ENCODE measurements at regions of chr3 and their contacts with region 1.

Region 1: DNA sequence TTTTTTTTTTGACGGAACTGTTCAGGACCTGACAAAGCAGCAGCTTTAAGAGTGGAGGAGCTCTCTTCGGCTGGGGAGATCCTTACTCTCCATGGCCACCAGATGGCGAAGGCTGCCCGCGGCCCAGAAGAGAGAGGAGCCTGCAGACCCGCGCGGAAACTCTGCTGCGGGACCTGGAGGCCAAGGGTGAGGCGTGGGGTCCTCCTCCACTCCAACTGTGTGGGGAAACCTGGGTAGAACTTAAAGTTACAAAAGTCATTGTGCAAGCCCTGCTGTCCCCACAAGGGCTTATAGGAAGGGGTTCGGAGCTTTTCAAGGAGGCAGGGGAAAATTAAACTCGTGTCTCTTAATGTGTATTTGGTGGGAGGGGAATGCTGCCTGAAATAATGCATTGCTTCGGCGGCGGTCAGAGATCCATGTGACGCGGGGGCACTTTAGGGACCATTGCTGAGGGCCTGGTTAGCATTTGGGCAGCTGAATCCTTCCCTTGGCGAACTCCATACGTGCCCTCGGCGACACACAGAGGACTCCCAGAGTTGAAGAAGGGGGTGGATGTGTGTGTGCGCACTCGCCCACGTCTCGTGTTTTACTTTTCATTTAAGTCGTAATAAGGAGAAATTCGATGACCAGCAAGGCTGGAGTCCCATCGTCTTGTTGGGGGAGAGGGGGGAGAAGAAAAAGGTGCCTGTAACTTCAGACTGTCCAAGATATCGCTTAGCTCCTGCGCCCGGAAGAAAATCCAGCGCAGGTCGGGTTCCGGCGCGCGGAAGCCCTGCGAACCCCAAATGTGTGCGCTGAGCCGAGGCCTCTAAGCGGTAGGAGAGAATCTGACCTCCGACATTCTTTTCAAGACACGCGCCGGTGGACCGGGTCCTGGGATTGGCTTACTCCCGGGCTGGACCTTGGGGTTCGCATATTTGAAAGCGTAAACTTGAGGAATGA is 9.7 kb downstream of the EOMES start:
- DNase-seq: peak; percentile 85
- CTCF ChIP-seq: peak; percentile 84

Region 2: GRCh38 chr3:27699067-27699466 is 13.3 kb before region 1 on chr3:
- CTCF ChIA-PET with region 1: interaction called, 21 read pairs
- POLR2A ChIA-PET with region 1: no interaction called
- DNase-seq: no peak
- CTCF ChIP-seq: no peak

Region 3: GRCh38 chr3:28139967-28140634 is 427.7 kb after region 1 on chr3:
- CTCF ChIA-PET with region 1: no interaction called
- POLR2A ChIA-PET with region 1: no interaction called
- DNase-seq: no peak
- CTCF ChIP-seq: no peak

Region 4: GRCh38 chr3:28286595-28286994 is 574.2 kb after region 1 on chr3:
- CTCF ChIA-PET with region 1: interaction called, 19 read pairs
- POLR2A ChIA-PET with region 1: no interaction called
- DNase-seq: peak; percentile 15
- CTCF ChIP-seq: peak; percentile 46

Region 5: GRCh38 chr3:28334552-28334951 is 622.1 kb after region 1 on chr3:
- CTCF ChIA-PET with region 1: interaction called, 127 read pairs
- POLR2A ChIA-PET with region 1: no interaction called
- DNase-seq: no peak
- CTCF ChIP-seq: no peak